ENCODE measurements at regions of chr5 and their contacts with region 1.

Region 1: DNA sequence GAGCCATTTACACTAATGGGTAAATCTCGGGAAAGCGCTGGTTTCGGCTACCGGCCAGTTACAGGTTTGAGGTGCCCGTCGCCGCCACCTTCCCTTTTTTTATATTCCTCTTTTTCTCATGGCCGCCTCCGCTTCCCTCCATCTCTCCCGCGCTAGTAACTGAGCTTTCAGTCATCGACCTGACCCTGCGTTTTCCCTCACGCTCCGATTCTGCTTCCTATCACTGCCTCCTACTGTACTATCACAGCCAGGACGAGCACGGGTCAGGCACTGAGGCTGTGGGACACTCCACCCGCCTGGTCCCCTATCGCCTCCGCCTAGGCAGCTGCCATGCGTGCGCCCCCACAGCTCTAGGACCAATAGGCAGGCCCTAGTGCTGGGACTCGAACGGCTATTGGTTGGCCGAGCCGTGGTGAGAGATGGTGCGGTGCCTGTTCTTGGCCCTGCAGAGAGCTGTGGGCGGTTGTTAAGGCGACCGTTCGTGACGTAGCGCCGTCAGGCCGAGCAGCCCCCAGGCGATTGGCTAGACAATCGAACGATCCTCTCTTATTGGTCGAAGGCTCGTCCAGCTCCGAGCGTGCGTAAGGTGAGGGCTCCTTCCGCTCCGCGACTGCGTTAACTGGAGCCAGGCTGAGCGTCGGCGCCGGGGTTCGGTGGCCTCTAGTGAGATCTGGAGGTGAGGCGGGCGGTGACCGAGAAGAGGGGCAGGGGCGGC is at the start of gene HMGCR:
- DNase-seq: peak; percentile 99
- H3K4me3 Mint-ChIP-seq: no peak within 1 kb of the TSS
- H3K27ac Mint-ChIP-seq: no peak within 1 kb of the TSS
- H3K4me1 Mint-ChIP-seq: peaks cover 16% of the 10 kb centered on the region
- H3K27me3 Mint-ChIP-seq: no peaks in the 10 kb centered on the region
- CTCF ChIP-seq: no peak
- total RNA-seq, gene HMGCR: 188 and 224 TPM in 2 replicates

Region 2: GRCh38 chr5:74927336-74927735 is 409.4 kb before region 1 on chr5:
- CTCF ChIA-PET with region 1: interaction called, 11 read pairs
- intact Hi-C with region 1: loop called (anchors 10 kb)
- DNase-seq: no peak
- H3K4me3 Mint-ChIP-seq: no peak overlapping the region
- H3K27ac Mint-ChIP-seq: no peak overlapping the region
- H3K4me1 Mint-ChIP-seq: peaks cover 8% of the 10 kb centered on the region
- H3K27me3 Mint-ChIP-seq: no peaks in the 10 kb centered on the region
- CTCF ChIP-seq: no peak

Region 3: GRCh38 chr5:74934949-74935751 is 401.6 kb before region 1 on chr5:
- CTCF ChIA-PET with region 1: interaction called, 4 read pairs
- intact Hi-C with region 1: loop called (anchors 10 kb)
- DNase-seq: peak; percentile 63
- H3K4me3 Mint-ChIP-seq: peak overlapping the region; percentile 41
- H3K27ac Mint-ChIP-seq: peak overlapping the region; percentile 23
- H3K4me1 Mint-ChIP-seq: peaks cover 43% of the 10 kb centered on the region
- H3K27me3 Mint-ChIP-seq: no peaks in the 10 kb centered on the region
- CTCF ChIP-seq: peak; percentile 63

Region 4: DNA sequence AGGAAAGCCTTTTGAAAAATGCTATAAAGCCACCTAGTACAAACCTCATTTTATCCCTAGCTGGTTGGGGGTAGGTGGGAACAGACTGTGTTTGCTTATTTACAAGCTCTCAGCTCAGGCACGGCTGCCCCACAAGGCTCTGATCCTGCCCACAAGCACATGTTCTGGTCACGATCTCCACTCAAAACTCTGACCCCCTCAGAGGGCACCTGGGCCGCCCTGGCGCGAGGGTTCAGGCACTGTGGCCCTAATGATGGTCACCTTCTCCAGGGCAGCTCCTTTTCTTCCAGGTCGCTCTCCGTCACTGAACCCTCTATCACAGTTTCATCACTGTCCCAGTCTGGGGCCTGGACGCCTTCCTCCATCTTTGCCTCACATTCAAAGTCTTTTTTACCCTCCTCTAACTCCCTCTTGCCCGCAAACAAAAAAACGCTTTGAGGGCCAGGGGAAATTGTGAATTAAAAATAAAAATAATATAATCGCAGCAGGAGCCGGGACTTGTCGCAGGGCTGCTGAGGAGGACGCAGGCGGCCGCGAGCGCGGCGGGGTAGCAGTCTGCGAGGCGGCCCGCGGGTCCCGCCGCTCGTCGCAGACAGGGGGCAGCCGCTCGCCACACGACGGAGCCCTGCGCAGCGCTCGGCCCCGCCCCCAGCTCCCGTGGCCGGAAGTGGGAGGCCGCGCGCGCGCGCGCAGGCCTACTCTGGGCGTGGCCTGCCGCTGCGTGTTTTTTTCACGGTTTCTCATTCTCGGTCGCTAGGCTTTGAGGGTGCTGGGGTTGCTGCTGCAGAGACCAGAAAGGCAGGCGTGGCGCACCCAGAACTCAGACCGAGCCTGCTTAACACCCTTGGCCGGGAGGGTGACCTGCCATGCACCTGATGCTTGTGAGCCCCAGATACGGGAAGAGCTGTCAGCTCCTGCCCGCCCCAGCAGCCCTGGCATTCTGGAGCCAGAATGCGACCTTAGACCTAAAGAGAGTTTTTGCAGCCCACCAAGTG is 100.2 kb before region 1 on chr5 and contains the start of gene ANKRD31:
- CTCF ChIA-PET with region 1: interaction called, 10 read pairs
- intact Hi-C with region 1: loop called (anchors 2 kb)
- DNase-seq: peak; percentile 94
- H3K4me3 Mint-ChIP-seq: peak within 1 kb of the TSS; percentile 69
- H3K27ac Mint-ChIP-seq: peak within 1 kb of the TSS; percentile 81
- H3K4me1 Mint-ChIP-seq: peaks cover 30% of the 10 kb centered on the region
- H3K27me3 Mint-ChIP-seq: no peaks in the 10 kb centered on the region
- CTCF ChIP-seq: peak; percentile 85
- total RNA-seq, gene ANKRD31: 1.5 and 1.7 TPM in 2 replicates

Region 5: DNA sequence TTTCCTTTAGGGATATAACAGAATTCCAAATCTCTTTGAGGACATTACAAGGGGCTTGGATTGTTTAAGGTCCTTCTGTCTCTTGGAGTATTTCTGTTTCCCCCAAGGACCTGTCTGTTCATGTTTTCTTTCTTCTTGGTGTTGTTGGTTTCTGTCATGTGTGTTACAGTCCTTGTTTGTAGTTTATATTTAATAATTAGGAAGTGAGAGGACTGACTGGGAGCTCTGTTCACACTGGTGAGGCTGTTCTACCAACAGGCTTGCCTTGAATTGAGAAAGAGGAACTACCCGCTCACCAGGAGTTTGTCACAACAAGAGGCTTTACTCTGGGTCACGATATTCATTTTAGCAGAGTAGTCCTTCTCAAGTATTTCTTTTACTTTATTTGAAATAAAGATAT is 627.2 kb after region 1 on chr5:
- CTCF ChIA-PET with region 1: no interaction called
- intact Hi-C with region 1: no loop called
- DNase-seq: no peak
- H3K4me3 Mint-ChIP-seq: no peak overlapping the region
- H3K27ac Mint-ChIP-seq: no peak overlapping the region
- H3K4me1 Mint-ChIP-seq: no peaks in the 10 kb centered on the region
- H3K27me3 Mint-ChIP-seq: peaks cover 54% of the 10 kb centered on the region
- CTCF ChIP-seq: no peak

Measured in Calu3 (cell line).